ENCODE measurements at regions of chr2 and their contacts with region 1.

Region 1: GRCh38 chr2:219543601-219544358 is at the starts of genes CHPF and TMEM198:
- DNase-seq: peak; percentile 97
- ATAC-seq: peak; percentile 89
- H3K4me3 ChIP-seq: peak within 1 kb of the TSS; percentile 86
- H3K27ac ChIP-seq: peak within 1 kb of the TSS; percentile 48
- H3K4me1 ChIP-seq: peaks cover 12% of the 10 kb centered on the region
- H3K27me3 ChIP-seq: no peaks in the 10 kb centered on the region
- CTCF ChIP-seq: 0 out of 2 replicates have a peak, but pooled peaks have one; percentile 0
- POLR2A ChIP-seq: peak; percentile 75
- RAD21 ChIP-seq: no peak
- total RNA-seq, gene CHPF: 24.0 and 27.2 TPM in 2 replicates
- total RNA-seq, gene TMEM198: under 0.01 and 0.18 TPM in 2 replicates

Region 2: GRCh38 chr2:219388127-219388844 is 155.5 kb before region 1 on chr2:
- CTCF ChIA-PET with region 1: no interaction called
- POLR2A ChIA-PET with region 1: no interaction called
- dilution Hi-C with region 1: no loop called
- in situ Hi-C with region 1: no loop called
- intact Hi-C with region 1: no loop called
- DNase-seq: peak; percentile 95
- ATAC-seq: peak; percentile 84
- H3K4me3 ChIP-seq: peak overlapping the region; percentile 26
- H3K27ac ChIP-seq: peak overlapping the region; percentile 68
- H3K4me1 ChIP-seq: peaks cover 23% of the 10 kb centered on the region
- H3K27me3 ChIP-seq: 0 out of 2 replicates have a peak, but pooled peaks cover 2% of the 10 kb centered on the region
- CTCF ChIP-seq: peak; percentile 72
- POLR2A ChIP-seq: no peak
- RAD21 ChIP-seq: peak; percentile 30; the same call in 1 of the 2 replicates

Region 3: DNA sequence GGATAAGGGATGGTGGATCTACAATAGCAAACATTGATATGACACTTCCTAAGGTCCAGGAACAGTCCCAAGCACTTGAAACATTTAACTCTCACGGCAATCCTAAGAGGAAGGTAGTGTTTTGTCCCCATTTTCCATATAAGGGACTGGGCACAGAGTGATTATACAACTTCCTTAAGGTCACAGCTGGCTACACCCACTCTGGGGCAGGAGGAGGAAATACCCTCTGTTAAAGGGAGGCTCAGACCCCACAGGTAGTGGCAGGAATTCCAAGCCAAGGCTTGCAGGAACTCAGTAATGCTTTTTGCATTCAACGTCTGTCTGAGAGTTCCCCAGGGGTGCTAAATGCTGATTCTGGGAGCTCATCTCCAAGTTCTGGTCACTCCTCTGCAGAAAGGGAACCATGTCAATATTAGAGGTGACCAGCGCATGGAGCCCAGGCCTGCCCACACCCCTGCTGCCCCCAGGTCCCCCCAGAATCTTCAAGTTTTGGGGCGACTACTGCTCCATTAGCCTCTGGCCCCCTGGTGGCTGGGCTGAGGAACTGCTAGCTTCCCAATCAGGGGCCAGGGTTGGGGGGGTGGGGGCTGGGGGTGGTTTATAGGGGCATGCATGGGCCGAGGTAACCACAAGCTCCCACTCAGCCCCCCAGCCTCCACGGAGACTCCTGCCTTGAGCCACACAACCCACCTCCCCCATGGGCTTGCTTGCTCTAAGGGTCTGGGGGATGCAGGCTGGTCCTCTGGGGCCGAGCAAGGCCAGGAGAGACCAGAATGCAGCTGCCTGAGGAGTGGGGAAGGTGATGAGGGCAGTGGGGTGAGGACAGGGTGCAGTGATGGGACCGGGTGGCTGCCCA is 16.5 kb after region 1 on chr2:
- CTCF ChIA-PET with region 1: interaction called, 10 read pairs
- POLR2A ChIA-PET with region 1: no interaction called
- dilution Hi-C with region 1: no loop called
- in situ Hi-C with region 1: no loop called
- intact Hi-C with region 1: no loop called
- DNase-seq: no peak
- ATAC-seq: peak; percentile 56
- H3K4me3 ChIP-seq: no peak overlapping the region
- H3K27ac ChIP-seq: no peak overlapping the region
- H3K4me1 ChIP-seq: peaks cover 2% of the 10 kb centered on the region; the same call in 1 of the 2 replicates
- H3K27me3 ChIP-seq: no peaks in the 10 kb centered on the region
- CTCF ChIP-seq: peak; percentile 39
- POLR2A ChIP-seq: no peak
- RAD21 ChIP-seq: no peak

Region 4: GRCh38 chr2:219597552-219598307 is 54.0 kb after region 1 on chr2 and contains the start of gene STK11IP:
- CTCF ChIA-PET with region 1: no interaction called
- POLR2A ChIA-PET with region 1: no interaction called
- dilution Hi-C with region 1: no loop called
- in situ Hi-C with region 1: no loop called
- intact Hi-C with region 1: loop called (anchors 2 kb)
- DNase-seq: peak; percentile 96
- ATAC-seq: peak; percentile 97
- H3K4me3 ChIP-seq: peak within 1 kb of the TSS; percentile 63
- H3K27ac ChIP-seq: peak within 1 kb of the TSS; percentile 88
- H3K4me1 ChIP-seq: peaks cover 2% of the 10 kb centered on the region
- H3K27me3 ChIP-seq: no peaks in the 10 kb centered on the region; the same call in 1 of the 2 replicates
- CTCF ChIP-seq: no peak
- POLR2A ChIP-seq: peak; percentile 82
- RAD21 ChIP-seq: no peak
- total RNA-seq, gene STK11IP: 6.7 and 19.7 TPM in 2 replicates

Region 5: DNA sequence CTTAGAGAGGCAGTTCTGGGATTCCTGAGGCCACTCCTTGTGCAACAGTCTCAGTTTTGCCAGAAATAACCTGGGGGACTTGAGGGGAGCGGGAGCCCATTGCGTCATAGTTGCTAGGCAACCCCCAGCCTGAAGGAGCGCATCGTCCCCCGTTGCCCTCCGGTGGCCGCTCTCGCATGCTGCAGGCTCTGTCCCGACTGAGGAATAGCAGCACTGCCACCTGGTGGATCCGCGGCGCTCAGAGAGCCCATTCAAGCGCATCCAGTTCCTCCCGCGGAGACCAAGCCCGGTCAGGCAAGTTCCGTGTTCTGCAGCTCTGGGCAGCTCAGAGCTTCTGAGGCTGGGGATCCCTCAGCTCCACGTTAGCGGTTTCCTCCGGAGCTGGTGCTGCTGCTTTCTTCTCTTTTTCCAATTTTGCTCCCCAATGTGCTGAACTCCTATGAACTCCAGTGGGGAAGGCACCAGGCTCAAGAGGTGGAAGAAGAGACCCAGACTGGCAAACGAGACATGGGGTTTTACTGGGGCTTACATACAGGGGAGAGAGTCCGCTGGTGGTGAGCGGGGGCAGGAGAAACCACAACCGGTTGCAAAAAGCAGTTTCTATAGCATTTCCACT is 98.8 kb after region 1 on chr2:
- CTCF ChIA-PET with region 1: interaction called, 4 read pairs
- POLR2A ChIA-PET with region 1: no interaction called
- dilution Hi-C with region 1: no loop called
- in situ Hi-C with region 1: no loop called
- intact Hi-C with region 1: loop called (anchors 1 kb)
- DNase-seq: peak; percentile 94
- ATAC-seq: peak; percentile 97
- H3K4me3 ChIP-seq: no peak overlapping the region
- H3K27ac ChIP-seq: no peak overlapping the region
- H3K4me1 ChIP-seq: peaks cover 12% of the 10 kb centered on the region
- H3K27me3 ChIP-seq: no peaks in the 10 kb centered on the region
- CTCF ChIP-seq: peak; percentile 100; the same call in 1 of the 2 replicates
- POLR2A ChIP-seq: 0 out of 2 replicates have a peak, but pooled peaks have one; percentile 22
- RAD21 ChIP-seq: peak; percentile 96

Region 6: DNA sequence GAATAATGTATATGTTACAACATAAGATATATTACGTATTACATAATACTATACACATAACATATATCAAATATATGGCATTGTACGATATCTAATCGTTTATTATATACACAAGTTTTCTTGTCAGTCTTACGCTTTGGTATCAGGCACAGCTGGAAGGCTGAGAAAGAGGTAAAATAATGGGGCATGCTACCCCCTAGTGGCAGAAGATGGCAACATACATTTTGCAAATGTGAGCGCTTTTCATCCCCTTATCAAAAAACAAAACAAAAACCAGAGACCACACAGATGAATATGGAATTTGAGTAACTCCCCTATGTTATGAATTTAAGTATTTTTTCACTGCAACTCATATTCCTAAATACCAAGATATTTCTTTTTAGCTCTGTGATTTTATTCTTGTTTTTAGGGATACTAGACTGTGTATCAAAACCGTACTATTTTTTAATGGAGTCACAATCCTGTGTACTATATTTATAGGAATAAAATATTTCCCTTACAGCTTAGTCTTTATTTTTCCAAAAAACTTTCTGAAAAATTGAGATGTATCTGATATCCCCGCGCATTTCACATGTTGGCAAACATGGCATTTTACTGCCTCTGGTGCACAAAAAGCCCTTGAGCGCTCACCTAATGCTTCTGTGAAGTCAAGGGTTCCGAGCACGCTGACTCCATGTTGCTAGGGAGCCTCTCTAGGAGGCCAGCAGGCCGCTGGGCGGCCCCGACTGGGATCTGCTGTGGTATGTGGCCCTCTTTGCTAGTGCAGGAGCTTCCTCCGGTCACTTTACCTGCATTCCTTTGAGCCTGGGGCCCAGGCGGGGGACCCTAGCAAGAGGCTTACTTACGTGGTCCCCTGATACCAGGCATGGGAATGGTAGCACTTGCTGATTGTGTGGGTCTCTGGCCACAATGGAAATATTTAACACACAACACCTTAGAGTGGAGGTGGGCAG is 146.2 kb after region 1 on chr2:
- CTCF ChIA-PET with region 1: interaction called, 3 read pairs
- POLR2A ChIA-PET with region 1: no interaction called
- dilution Hi-C with region 1: no loop called
- in situ Hi-C with region 1: no loop called
- intact Hi-C with region 1: loop called (anchors 1 kb)
- DNase-seq: peak; percentile 74
- ATAC-seq: peak; percentile 69
- H3K4me3 ChIP-seq: no peak overlapping the region
- H3K27ac ChIP-seq: no peak overlapping the region
- H3K4me1 ChIP-seq: peaks cover 7% of the 10 kb centered on the region
- H3K27me3 ChIP-seq: peaks cover 2% of the 10 kb centered on the region; the same call in 1 of the 2 replicates
- CTCF ChIP-seq: peak; percentile 75
- POLR2A ChIP-seq: no peak
- RAD21 ChIP-seq: peak; percentile 67

Measured in IMR-90 (cell line).